ENCODE measurements at regions of chr1 and their contacts with region 1.

Region 1: DNA sequence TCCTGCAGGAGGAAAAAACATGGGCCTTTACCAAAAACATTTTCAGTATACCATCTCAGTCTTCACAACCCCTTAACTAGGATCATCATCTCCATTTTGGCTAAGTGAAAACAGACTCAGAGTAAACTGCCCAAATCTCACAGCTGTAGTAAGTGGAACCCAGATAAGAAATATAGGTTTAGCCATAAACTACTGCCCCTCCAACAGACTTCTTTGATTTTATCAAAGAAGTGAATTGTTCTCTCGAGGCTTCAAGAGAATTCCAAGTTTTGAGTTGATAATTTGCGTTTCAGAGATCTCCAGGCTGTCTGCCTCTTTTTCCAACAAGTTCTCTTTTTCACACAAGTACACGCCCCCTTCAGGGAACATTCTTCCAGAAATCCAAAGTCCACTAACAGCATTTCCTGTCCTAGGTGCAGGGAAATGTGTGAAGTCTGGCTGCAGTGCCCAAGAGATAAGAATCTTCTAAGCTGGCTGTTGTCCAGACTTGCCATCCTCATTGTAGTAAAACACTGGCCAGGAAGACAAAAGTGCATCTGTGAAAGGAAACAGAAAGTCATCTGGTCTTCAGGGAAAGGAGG is 30.8 kb downstream of the RNF19B start:
- DNase-seq: no peak
- H3K4me3 ChIP-seq: no peak overlapping the region
- CTCF ChIP-seq: no peak

Region 2: GRCh38 chr1:32919811-32920733 is 13.8 kb before region 1 on chr1:
- CTCF ChIA-PET with region 1: interaction called, 70 read pairs
- POLR2A ChIA-PET with region 1: no interaction called
- DNase-seq: no peak
- H3K4me3 ChIP-seq: no peak overlapping the region
- CTCF ChIP-seq: no peak

Region 3: DNA sequence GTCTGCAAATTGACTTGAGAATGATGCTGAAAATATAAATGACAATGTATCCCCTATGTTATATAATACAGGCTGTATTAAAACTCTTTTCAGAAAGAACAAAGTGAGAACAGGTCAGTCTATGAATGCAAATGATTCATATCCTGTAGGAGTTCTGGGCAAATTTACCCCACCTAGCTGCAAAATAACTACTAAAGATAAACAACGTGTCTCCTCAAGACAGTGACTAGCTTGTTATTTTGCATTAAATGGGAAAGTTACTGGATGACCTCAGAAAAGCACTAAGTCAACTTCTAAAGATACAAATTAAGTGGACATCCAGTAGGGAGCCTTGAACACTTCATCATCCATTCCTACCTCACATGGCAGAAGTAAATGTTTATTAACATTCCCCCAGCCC is 19.7 kb after region 1 on chr1:
- CTCF ChIA-PET with region 1: interaction called, 101 read pairs
- POLR2A ChIA-PET with region 1: interaction called, 3 read pairs
- DNase-seq: no peak
- H3K4me3 ChIP-seq: no peak overlapping the region
- CTCF ChIP-seq: no peak

Region 4: GRCh38 chr1:32992489-32993323 is 58.9 kb after region 1 on chr1:
- CTCF ChIA-PET with region 1: interaction called, 14 read pairs
- POLR2A ChIA-PET with region 1: no interaction called
- DNase-seq: peak; percentile 95
- H3K4me3 ChIP-seq: no peak overlapping the region
- CTCF ChIP-seq: no peak

Measured in AG04449 (cell line).